Activated CD4-positive, alpha-beta memory T cell treated with anti-CD3 and anti-CD28 coated beads for 36 hours (primary cell): ENCODE measurements at regions of chr19 and their contacts with region 1.

Region 1: GRCh38 chr19:40941481-40942219 is 49.4 kb upstream of the CYP2B6 start:
- DNase-seq: no peak
- H3K4me3 Mint-ChIP-seq: no peak overlapping the region
- H3K27ac Mint-ChIP-seq: no peak overlapping the region
- H3K4me1 Mint-ChIP-seq: peaks cover 7% of the 10 kb centered on the region
- H3K27me3 Mint-ChIP-seq: peaks cover 14% of the 10 kb centered on the region

Region 2: DNA sequence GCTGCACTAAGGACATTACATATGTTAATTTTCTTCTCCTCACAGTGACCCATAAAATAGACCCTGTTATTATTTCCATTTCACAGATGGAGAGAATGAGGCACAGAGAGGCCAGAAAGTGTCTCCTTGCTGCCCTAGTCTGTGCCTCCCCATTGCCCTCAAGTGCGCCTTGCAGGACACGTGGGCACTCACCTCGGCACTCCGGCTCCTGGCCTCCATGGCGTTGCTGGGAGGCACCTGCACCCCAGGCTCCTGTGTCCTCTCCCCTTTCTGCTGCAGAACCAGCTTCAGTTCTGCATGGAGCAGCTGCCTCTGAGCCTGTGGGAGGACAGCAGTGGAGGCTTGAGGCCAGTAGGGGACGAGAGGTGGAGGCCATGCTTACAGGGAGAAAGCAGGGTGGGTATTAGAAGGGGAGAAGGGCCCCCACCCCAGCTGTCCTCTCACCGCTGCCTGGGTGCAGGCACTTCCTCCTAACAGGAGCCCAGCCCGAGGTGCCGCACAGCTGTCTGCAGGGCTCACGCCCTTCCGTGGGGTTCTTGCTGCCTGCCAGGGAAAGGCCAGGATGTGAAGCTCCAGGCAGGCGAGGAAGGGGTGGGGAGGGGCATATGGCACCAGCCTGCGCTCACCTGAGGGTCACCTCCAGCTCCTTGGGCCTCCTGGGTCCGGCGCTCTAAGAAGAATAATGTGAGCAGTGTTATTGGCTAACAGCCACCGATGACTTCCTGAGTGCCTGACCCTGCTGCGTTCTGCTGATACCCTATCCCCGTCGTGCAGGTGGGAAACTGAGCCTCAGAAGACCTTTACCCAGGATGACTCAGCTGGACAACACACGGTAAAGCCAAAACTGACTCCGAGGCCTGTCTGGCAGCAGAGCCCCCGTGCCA is 533.7 kb before region 1 on chr19:
- CTCF ChIA-PET with region 1: no interaction called
- POLR2A ChIA-PET with region 1: no interaction called
- intact Hi-C with region 1: no loop called
- DNase-seq: no peak
- H3K4me3 Mint-ChIP-seq: no peak overlapping the region
- H3K27ac Mint-ChIP-seq: no peak overlapping the region
- H3K4me1 Mint-ChIP-seq: peaks cover 13% of the 10 kb centered on the region
- H3K27me3 Mint-ChIP-seq: no peaks in the 10 kb centered on the region

Region 3: GRCh38 chr19:40974633-40975037 is 33.0 kb after region 1 on chr19:
- CTCF ChIA-PET with region 1: no interaction called
- POLR2A ChIA-PET with region 1: no interaction called
- intact Hi-C with region 1: loop called (anchors 1 kb)
- DNase-seq: peak; percentile 83
- H3K4me3 Mint-ChIP-seq: no peak overlapping the region
- H3K27ac Mint-ChIP-seq: no peak overlapping the region
- H3K4me1 Mint-ChIP-seq: peaks cover 26% of the 10 kb centered on the region
- H3K27me3 Mint-ChIP-seq: peaks cover 6% of the 10 kb centered on the region